HEK293T (cell line): ENCODE measurements at regions of chr12 and their contacts with region 1.

Region 1: DNA sequence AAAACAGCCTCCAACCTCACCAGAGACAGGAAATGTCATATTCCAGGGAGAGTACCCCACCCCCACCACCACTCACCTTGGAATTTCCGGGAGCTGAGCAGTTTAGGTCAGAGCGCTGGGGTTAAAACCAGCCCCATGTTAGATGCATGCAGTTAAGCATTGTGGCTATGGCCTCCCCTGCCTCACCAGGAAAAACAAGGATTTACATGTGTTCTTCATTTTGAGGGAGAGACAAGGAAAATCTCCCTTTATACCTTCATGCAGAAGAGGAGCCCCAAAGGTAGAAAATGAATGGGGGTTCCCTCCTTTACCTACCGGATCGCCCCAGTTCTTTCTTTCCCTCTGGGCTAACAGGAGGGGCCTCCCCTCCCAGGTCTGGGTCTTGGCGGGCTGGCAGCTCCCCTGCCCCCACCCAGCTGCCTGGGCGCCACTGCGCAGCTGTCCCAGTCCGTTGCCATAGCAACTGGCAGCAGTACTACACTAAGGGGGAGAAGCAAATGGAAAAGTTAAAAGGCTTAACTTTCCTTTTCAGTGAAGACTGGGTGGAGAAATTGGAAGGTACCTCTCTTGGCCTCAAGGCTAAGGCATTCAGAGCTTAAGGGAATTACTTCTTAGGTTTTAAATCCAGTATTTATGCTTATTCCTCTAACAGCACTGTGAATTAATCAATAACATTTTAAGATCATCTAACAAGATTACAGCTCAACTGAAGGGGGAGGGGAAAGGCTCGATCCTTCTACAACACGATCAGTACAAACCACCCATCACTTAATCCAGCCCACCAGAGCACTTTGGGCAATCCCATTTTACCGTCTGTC is 20.5 kb downstream of the CBX5 start:
- DNase-seq: peak; percentile 87

Region 2: DNA sequence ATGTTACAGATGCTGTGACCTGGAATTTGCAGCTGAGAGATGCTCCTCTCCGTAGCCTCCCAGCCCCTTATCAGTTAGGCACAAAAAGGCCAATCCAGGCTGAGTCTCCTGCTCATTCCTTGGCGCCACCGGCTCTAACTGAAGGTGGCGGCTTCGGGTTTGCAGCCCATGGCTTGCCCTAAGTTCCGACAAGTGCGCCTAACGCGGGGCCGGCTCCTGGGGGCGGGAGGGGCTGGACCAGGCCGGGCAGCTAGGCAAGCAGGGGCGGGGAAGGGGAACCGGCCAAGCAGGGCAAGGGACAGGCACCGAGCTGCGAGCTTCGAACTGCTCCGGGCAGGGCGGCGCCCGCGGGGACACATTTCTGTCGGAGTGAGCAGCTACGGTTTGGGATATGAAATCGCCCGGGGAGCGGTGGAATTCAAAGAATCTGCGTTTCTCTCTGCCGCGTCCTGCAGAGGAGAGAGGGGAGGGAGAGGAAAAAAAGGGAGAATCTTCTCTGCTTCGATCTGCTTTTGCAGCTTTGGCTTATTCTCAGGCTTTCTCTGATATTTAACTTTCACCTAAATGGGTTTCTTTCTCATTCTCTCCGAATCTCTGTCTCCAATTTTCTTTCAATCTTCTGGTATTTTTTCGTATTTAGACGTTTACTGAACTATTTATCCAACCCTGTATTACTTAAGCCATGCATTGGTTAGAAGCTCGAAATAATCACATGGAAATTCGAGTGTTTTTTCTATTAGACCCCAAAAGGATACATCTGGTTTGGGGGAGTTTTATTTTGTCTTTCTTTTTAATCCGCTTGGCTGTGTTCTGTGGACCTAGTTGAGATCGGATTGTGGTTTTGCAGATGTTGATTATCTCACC is 306.3 kb before region 1 on chr12:
- CTCF ChIA-PET with region 1: no interaction called
- POLR2A ChIA-PET with region 1: no interaction called
- DNase-seq: peak; percentile 54

Region 3: DNA sequence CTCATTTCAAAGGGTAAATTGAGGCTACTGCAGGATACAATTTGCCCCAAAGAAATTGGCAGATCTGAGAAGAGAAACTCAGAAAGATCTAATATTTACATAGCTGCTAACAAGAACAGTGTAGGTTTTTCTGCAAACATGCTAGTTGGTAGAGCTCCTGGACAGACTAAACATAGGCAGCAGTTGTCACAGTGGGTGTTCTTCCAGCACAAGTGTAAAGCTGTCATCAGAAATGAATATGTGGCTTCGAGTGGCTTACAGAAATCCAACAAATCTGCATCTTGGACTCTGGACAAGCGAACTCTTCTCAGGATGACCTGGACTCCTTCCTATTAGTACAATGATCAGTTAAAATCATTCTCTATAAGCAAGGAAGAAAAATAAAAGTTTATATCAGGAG is 14.6 kb after region 1 on chr12:
- CTCF ChIA-PET with region 1: no interaction called
- POLR2A ChIA-PET with region 1: interaction called, 175 read pairs
- DNase-seq: peak; percentile 40

Region 4: DNA sequence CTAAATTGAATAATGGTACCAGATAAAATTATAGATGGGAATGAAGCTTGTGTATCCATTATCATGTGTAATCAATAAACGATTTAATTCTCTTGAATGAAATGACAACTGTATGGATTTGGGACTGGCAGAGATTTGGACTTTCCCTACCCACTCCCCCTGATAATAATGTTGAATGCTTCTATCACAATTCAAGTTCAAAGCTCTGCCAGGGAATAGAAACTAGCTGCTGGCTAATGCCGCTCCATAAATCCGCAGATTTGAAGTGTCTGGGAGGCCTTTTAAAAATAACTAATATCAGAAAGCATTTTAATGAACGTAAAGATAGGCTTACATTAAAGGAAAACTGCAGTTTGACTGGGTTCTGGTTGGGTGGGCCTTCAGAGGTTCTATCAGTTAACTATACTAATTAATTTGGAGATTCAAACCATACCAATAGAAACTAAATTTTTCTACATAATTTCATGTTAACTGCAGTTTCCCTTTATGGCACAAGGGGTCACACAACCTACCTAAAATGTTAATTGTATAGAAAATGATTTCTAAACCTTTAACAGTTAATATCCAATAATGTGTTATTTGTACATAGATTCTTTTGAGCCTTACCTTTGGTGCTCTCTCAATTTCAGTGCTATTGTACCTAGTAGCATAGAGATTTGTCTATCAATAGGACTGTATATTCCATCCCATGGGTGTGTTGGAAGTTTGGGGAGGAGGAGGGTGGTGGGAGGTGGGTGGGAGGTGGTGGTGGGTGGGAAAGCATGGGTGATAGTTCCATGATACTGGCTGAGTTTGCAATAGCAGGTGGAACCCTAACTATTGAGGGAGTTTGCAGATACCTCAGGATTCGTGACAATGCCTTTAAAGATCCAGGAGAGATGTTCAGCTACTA is 26.0 kb after region 1 on chr12:
- CTCF ChIA-PET with region 1: no interaction called
- POLR2A ChIA-PET with region 1: interaction called, 175 read pairs
- DNase-seq: no peak